HEK293 (cell line): ENCODE measurements at regions of chr12 and their contacts with region 1.

Region 1: DNA sequence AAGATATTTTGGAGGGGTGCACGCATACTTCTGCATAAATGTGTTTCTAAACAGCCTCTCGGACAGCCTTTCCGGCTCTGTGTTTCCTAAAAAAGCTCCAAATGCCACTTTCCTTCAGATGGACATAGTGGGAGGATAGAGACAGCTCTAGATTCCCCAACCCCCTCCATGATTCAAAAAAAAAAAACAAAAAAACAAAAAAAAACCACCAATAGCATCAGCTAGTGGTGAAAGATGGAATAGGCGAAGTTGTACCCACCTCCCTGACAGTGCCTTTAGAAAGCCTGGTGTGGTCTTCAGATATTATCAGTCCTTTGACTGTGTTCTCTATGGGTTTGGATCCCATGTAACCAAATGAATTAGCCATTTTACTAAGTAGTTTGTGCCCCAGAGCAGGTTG is 94.1 kb downstream of the PHETA1 start:
- H3K4me3 ChIP-seq: no peak overlapping the region
- H3K27ac ChIP-seq: no peak overlapping the region
- H3K4me1 ChIP-seq: peaks cover 7% of the 10 kb centered on the region
- CTCF ChIP-seq: peak; percentile 34; the same call in 1 of the 2 replicates

Region 2: DNA sequence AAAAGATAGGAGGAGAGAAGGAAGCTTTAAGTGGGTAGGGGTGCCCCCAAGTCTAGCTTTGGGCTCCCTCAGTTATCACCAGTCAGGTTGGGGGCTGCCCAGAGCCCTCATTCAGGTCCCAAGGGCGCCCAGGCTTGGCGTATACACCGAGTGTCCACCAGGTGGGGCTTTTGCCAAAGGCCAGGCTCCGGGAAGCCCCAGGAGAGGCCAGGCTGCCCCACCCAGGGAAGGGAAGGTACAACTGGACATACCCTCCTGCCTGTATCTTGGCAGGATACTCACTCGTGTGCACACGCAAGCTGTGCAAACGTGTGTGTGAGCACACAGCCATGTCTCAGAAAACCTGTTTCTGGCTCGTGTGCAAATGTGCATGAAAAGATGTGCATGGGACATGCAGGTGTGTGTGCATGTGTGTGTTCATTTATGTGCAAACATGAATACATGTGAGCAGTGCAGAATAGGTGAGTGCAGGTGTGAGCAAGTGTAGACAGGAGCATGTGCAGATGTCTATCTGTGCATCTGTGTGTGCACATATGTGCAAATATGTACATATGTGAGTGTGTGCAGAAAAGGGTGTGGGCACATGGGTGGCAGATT is 250.5 kb before region 1 on chr12:
- CTCF ChIA-PET with region 1: interaction called, 12 read pairs
- POLR2A ChIA-PET with region 1: no interaction called
- H3K4me3 ChIP-seq: no peak overlapping the region
- H3K27ac ChIP-seq: no peak overlapping the region
- H3K4me1 ChIP-seq: no peaks in the 10 kb centered on the region
- CTCF ChIP-seq: peak; percentile 84

Region 3: DNA sequence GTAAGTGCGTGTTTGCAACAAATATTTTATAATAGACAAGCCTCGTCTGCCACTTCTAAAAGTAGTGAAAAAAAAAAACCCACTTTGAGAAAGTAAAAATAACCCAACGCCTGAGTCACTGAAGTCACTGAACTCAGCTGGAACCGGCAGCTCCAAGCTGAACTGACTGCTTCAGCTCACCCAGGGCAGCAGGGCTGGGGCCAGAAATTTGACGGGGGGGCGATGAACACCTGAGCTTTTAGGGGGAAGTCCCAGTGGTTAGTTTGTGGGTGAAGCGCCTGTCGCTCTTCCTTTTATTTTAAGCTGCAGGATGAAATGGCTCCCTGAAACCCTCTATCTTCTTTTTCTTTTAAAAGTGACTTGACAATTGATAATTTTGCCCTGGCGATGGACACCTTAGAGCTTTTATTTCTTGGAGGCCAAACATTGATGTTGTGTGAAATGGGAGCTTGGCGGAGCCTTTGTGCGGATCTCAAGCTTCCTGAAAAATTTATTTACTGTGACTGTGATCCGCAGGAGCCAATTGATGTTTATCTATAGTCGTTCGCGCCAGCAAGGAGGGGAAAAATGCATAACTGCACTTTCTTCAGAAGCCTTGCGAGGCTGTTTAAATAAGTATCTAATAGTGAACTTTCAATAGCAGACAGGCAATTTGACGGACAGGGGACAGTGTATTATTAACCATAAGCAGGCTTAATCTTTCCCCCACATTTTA is 181.2 kb before region 1 on chr12:
- CTCF ChIA-PET with region 1: no interaction called
- POLR2A ChIA-PET with region 1: no interaction called
- H3K4me3 ChIP-seq: no peak overlapping the region
- H3K27ac ChIP-seq: no peak overlapping the region
- H3K4me1 ChIP-seq: no peaks in the 10 kb centered on the region
- CTCF ChIP-seq: no peak

Region 4: GRCh38 chr12:111261911-111262676 is 12.7 kb before region 1 on chr12:
- CTCF ChIA-PET with region 1: interaction called, 15 read pairs
- POLR2A ChIA-PET with region 1: no interaction called
- H3K4me3 ChIP-seq: no peak overlapping the region
- H3K27ac ChIP-seq: no peak overlapping the region
- H3K4me1 ChIP-seq: no peaks in the 10 kb centered on the region
- CTCF ChIP-seq: no peak